ENCODE measurements at regions of chr7 and their contacts with region 1.

Region 1: GRCh38 chr7:99472561-99473243 is at the start of gene ZNF789:
- DNase-seq: peak; percentile 96
- H3K4me3 Mint-ChIP-seq: peak within 1 kb of the TSS; percentile 99
- H3K27ac Mint-ChIP-seq: peak within 1 kb of the TSS; percentile 92
- H3K4me1 Mint-ChIP-seq: peaks cover 30% of the 10 kb centered on the region
- H3K27me3 Mint-ChIP-seq: peaks cover 1% of the 10 kb centered on the region
- total RNA-seq, gene ZNF789: 19.6 and 22.4 TPM in 2 replicates

Region 2: GRCh38 chr7:99616359-99617191 is 143.9 kb after region 1 on chr7 and contains the start of gene ZSCAN25:
- intact Hi-C with region 1: loop called (anchors 2 kb)
- DNase-seq: peak; percentile 79
- H3K4me3 Mint-ChIP-seq: peak within 1 kb of the TSS; percentile 96
- H3K27ac Mint-ChIP-seq: peak within 1 kb of the TSS; percentile 94
- H3K4me1 Mint-ChIP-seq: peaks cover 56% of the 10 kb centered on the region
- H3K27me3 Mint-ChIP-seq: peaks cover 4% of the 10 kb centered on the region
- total RNA-seq, gene ZSCAN25: 31.5 and 32.9 TPM in 2 replicates

Region 3: GRCh38 chr7:99837649-99838361 is 365.1 kb after region 1 on chr7:
- intact Hi-C with region 1: loop called (anchors 10 kb)
- DNase-seq: no peak
- H3K4me3 Mint-ChIP-seq: no peak overlapping the region
- H3K27ac Mint-ChIP-seq: peak overlapping the region; percentile 60
- H3K4me1 Mint-ChIP-seq: peaks cover 8% of the 10 kb centered on the region
- H3K27me3 Mint-ChIP-seq: peaks cover 4% of the 10 kb centered on the region